B cell (primary cell): ENCODE measurements at regions of chr7 and their contacts with region 1.

Region 1: DNA sequence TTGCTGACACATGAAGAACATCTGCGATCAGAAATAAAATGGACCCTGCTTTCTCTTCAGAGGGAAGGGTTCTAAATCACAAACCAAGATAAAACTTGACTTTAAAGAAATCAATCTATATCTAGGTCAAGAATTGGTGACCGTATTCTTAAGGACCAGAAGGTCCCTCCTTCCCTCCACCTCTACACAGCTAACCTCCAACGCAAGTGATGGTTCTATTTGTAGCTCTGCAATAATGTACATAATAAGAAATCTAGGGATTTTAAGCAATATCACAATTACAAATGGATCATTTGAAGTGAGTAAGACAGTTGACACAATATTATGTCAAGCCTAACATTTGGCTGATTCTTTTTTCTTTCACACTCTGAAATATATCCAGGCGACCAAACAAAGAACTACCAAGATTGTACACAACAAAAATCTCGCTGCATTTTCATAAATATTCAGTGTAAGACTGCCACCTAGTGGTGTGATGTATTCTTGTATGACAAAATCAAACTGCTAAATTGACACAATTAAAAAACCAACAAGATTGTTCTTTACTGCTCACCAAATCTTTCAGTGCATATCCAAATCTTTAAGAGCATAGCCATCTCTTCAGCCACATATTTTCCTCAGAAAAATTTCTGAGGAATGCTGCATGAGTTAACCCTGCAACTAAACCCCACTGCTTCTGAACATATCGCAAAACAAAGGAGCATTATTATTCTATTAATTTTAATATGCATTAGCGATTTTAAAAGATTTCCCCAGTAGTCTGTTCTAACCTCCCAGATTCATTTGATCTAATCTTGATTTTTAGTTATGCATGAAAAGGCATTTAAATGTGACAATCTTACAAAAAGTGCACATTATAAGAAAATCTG is 44.5 kb downstream of the ICA1 start:
- DNase-seq: peak; percentile 78
- ATAC-seq: peak; percentile 57
- H3K4me3 ChIP-seq: no peak overlapping the region
- H3K4me3 Mint-ChIP-seq: no peak overlapping the region
- H3K27ac ChIP-seq: no peak overlapping the region
- H3K27ac Mint-ChIP-seq: no peak overlapping the region
- H3K4me1 ChIP-seq: no peaks in the 10 kb centered on the region
- H3K4me1 Mint-ChIP-seq: peaks cover 2% of the 10 kb centered on the region
- H3K27me3 ChIP-seq: no peaks in the 10 kb centered on the region
- H3K27me3 Mint-ChIP-seq: no peaks in the 10 kb centered on the region
- CTCF ChIP-seq: peak; percentile 81

Region 2: GRCh38 chr7:7424151-7424873 is 793.1 kb before region 1 on chr7:
- CTCF ChIA-PET with region 1: interaction called, 8 read pairs
- POLR2A ChIA-PET with region 1: no interaction called
- intact Hi-C with region 1: loop called (anchors 1 kb)
- DNase-seq: peak; percentile 61
- ATAC-seq: peak; percentile 68
- H3K4me3 ChIP-seq: peak overlapping the region; percentile 36 to 66 (median 51)
- H3K4me3 Mint-ChIP-seq: peak overlapping the region; percentile 92
- H3K27ac ChIP-seq: peak overlapping the region in 1 of 2 donors; percentile 28
- H3K27ac Mint-ChIP-seq: peak overlapping the region; percentile 64
- H3K4me1 ChIP-seq: no peaks in the 10 kb centered on the region
- H3K4me1 Mint-ChIP-seq: peaks cover 10% of the 10 kb centered on the region
- H3K27me3 ChIP-seq: no peaks in the 10 kb centered on the region
- H3K27me3 Mint-ChIP-seq: no peaks in the 10 kb centered on the region
- CTCF ChIP-seq: peak; percentile 58

Region 3: DNA sequence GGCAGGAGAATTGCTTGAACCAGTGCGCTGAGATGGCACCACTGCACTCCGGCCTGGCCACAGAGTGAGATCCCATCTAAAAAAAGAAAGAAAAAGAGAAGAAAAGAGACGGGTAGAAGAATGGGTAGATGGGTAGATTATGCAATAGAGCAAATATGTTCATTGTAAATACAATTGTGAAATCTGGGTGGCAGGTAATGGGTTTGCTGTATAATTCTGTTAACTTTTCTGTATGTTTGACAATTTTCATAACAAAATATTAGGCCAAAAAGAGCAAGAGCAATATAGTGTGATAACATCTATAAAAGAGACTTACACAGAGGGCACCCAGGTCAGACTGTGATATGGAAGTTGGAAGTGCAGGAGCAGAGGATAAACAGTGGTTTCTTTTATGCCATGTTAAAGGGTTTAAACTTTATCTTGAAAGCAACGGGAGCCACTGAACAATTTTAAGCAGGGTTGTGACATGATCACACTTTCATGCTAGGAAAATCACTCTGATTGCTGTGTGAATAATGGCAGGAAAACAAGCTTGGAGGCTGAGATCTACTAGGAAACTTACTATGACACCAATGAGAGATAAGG is 675.1 kb before region 1 on chr7:
- CTCF ChIA-PET with region 1: interaction called, 4 read pairs
- POLR2A ChIA-PET with region 1: no interaction called
- intact Hi-C with region 1: loop called (anchors 2 kb)
- DNase-seq: no peak
- ATAC-seq: no peak
- H3K4me3 ChIP-seq: no peak overlapping the region
- H3K4me3 Mint-ChIP-seq: no peak overlapping the region
- H3K27ac ChIP-seq: no peak overlapping the region
- H3K27ac Mint-ChIP-seq: no peak overlapping the region
- H3K4me1 ChIP-seq: no peaks in the 10 kb centered on the region
- H3K4me1 Mint-ChIP-seq: no peaks in the 10 kb centered on the region
- H3K27me3 ChIP-seq: no peaks in the 10 kb centered on the region
- H3K27me3 Mint-ChIP-seq: no peaks in the 10 kb centered on the region
- CTCF ChIP-seq: no peak

Region 4: DNA sequence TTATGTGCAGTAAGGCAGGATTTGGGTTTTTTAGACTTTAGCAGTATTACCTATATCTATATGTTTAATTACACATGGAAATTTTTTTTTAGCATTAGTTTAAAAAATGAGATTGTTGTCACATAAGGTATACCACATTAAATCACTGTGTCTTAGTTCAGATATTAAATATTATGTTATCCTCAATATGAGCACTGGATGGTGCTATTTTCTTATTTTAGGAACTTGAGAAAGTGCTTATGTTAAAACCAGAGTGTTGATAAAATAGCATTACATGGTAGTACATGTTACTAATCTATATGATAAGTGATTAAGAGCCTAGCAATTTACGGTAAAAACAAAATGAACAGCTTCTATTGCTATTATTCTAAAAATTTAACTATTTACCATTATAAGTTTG is 622.0 kb before region 1 on chr7:
- CTCF ChIA-PET with region 1: interaction called, 44 read pairs
- POLR2A ChIA-PET with region 1: no interaction called
- intact Hi-C with region 1: loop called (anchors 1 kb)
- DNase-seq: peak; percentile 58
- ATAC-seq: peak; percentile 33
- H3K4me3 ChIP-seq: no peak overlapping the region
- H3K4me3 Mint-ChIP-seq: no peak overlapping the region
- H3K27ac ChIP-seq: no peak overlapping the region
- H3K27ac Mint-ChIP-seq: no peak overlapping the region
- H3K4me1 ChIP-seq: no peaks in the 10 kb centered on the region
- H3K4me1 Mint-ChIP-seq: no peaks in the 10 kb centered on the region
- H3K27me3 ChIP-seq: no peaks in the 10 kb centered on the region
- H3K27me3 Mint-ChIP-seq: no peaks in the 10 kb centered on the region
- CTCF ChIP-seq: peak; percentile 75

Region 5: DNA sequence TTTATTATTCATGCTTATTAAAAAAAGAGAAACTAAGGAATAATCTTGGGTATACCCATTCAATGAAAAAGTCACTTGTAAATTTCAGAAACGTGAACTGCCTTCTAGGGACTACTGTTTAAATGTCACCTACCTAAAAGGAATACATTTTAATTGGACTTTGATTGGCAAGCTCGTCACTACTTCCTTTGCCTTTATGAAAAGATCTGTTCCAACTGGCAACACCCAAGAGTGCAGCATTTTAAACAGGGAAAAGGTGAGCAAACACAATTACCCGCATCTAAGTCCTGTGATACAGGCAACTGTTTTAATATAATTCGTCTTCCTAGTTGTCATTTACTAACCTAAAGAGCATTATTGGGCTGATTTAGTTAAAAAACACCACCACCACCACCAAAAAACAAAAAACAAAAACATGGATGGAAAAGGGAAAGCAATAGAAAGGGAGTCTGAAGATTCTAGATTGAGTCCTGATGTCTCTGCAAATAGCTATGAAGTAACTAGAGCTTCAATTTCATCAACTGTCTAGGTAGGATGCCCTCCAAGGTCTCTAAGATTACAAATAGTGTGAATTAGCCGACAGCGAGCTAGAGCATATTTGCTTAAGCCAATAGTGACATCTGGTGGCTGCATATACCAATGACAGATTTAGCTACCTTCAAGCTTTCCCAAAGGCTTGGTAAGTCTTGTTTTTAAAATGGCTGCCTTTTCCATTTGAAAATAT is 78.4 kb after region 1 on chr7:
- CTCF ChIA-PET with region 1: no interaction called
- POLR2A ChIA-PET with region 1: no interaction called
- intact Hi-C with region 1: loop called (anchors 5 kb)
- DNase-seq: peak; percentile 70
- ATAC-seq: peak; percentile 67
- H3K4me3 ChIP-seq: no peak overlapping the region
- H3K4me3 Mint-ChIP-seq: no peak overlapping the region
- H3K27ac ChIP-seq: no peak overlapping the region
- H3K27ac Mint-ChIP-seq: no peak overlapping the region
- H3K4me1 ChIP-seq: no peaks in the 10 kb centered on the region
- H3K4me1 Mint-ChIP-seq: peaks cover 2% of the 10 kb centered on the region
- H3K27me3 ChIP-seq: peaks cover 0 to 5% (median 0%) of the 10 kb centered on the region in 4 experiments
- H3K27me3 Mint-ChIP-seq: peaks cover 17% of the 10 kb centered on the region
- CTCF ChIP-seq: peak; percentile 84